ENCODE measurements at regions of chr20 and their contacts with region 1.

Region 1: GRCh38 chr20:3000852-3001523 is 42.4 kb upstream of the GNRH2 start:
- DNase-seq: peak; percentile 75
- H3K4me3 Mint-ChIP-seq: no peak overlapping the region
- H3K27ac Mint-ChIP-seq: no peak overlapping the region
- H3K4me1 Mint-ChIP-seq: no peaks in the 10 kb centered on the region
- H3K27me3 Mint-ChIP-seq: no peaks in the 10 kb centered on the region

Region 2: DNA sequence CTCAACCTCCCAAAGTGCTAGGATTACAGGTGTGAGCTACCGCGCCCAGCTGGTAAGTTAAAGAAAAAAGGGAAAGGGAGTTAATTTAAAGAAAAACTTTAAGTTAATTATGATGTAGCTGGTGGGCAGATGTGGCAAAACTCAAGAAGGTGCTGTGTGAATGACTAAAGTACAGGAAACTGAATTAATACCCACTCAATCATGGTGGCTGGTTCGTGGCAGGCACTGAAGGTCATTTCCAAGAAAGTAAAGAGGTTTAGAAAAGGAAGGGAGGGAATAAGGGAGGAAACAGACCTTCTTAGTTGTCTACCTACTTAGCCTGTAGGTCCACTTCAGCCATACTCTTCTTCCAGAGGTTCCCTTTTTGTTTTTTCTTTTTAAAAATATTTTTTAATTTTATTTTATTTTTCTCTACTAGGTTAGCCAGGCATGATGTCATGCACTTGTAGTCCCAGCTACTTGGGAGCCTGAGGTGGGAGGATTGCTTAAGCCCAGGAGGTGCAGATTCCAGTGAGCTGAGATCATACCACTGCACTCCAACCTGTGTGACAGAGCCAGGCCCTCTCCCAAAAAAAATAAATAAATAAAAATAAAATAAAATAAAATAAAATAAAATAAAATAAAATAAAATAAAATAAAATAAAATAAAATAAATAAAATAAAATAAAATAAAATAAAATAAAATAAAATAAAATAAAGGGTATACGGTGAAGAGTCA is 717.1 kb before region 1 on chr20:
- intact Hi-C with region 1: no loop called
- DNase-seq: no peak
- H3K4me3 Mint-ChIP-seq: no peak overlapping the region
- H3K27ac Mint-ChIP-seq: no peak overlapping the region
- H3K4me1 Mint-ChIP-seq: no peaks in the 10 kb centered on the region
- H3K27me3 Mint-ChIP-seq: peaks cover 6% of the 10 kb centered on the region

Region 3: GRCh38 chr20:2752567-2753460 is 248.2 kb before region 1 on chr20:
- intact Hi-C with region 1: loop called (anchors 5 kb)
- DNase-seq: peak; percentile 83
- H3K4me3 Mint-ChIP-seq: peak overlapping the region; percentile 79
- H3K27ac Mint-ChIP-seq: no peak overlapping the region
- H3K4me1 Mint-ChIP-seq: peaks cover 23% of the 10 kb centered on the region
- H3K27me3 Mint-ChIP-seq: peaks cover 52% of the 10 kb centered on the region

Region 4: DNA sequence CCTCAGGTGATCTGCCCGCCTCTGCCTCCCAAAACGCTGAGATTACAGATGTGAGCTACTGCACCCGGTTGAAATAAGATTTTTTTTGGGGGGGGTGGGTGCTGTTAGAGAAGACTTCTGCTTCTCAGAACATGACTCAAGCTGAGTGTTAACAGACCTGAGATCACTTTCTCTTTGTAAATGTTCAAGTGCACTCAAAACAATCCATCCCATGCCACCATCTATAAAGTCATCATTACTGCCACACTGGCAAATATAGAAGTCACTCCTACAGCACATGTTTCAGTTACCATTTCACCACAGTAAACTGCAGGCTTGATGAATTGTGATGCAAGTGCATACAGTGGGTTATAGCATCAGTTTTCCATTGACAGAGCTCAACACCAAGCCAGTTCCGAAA is 151.5 kb before region 1 on chr20:
- intact Hi-C with region 1: loop called (anchors 1 kb)
- DNase-seq: no peak
- H3K4me3 Mint-ChIP-seq: no peak overlapping the region
- H3K27ac Mint-ChIP-seq: no peak overlapping the region
- H3K4me1 Mint-ChIP-seq: peaks cover 24% of the 10 kb centered on the region
- H3K27me3 Mint-ChIP-seq: no peaks in the 10 kb centered on the region

Measured in activated CD4-positive, alpha-beta T cell treated with anti-CD3 and anti-CD28 coated beads, Interleukin-2, amount 10 ng/mL, durations not matched to agents 24 days and 14 days (primary cell).